Sciatic nerve (tissue), 2 donors: ENCODE measurements at regions of chr1 and their contacts with region 1.

Region 1: DNA sequence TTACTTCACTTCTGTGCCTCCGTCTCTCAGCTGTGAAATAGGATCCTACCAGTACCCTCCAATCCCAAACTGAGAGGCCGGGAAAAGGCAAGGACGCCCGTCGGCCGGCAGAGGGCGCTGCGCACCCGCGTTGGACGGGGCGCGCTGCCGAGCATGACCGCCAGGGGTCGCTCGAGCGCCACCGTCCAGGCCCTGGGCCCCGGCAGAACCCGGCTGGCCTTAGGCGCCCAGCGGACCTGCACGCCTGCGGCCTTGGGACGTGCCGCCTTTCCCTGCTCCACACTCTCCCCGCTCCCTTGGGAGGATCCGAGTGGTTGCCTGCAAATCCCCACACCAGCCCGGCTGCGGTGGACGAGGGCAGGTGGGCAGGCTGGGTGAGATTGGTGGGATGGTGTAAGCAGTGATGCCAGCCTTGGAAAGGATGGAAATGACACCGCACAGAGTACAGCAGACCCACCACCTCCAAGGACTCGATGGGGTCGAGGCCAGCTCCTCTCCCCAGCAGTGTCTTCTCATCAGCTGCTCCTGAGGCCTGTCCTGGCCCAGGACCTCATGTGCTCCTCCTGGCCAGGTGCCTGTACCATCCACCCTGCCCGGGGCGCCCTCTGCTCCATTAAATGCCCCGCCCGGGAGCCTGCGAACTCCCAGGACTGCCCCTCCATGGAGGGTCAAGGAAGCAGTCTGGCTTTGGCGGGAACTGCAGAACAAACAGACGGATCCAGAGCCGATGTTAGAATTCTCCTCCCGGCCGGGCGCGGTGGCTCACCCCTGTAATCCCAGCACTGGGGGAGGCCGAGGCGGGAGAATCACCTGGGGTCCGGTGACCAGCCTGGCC is 47.4 kb upstream of the LBR start:
- DNase-seq: peak; percentile 78
- ATAC-seq: peak; percentile 89

Region 2: GRCh38 chr1:225388372-225388771 is 86.8 kb before region 1 on chr1:
- intact Hi-C with region 1: no loop called
- DNase-seq: no peak
- ATAC-seq: no peak

Region 3: GRCh38 chr1:225428068-225428880 is 46.9 kb before region 1 on chr1:
- intact Hi-C with region 1: no loop called
- DNase-seq: peak; percentile 95
- ATAC-seq: peak; percentile 98

Region 4: DNA sequence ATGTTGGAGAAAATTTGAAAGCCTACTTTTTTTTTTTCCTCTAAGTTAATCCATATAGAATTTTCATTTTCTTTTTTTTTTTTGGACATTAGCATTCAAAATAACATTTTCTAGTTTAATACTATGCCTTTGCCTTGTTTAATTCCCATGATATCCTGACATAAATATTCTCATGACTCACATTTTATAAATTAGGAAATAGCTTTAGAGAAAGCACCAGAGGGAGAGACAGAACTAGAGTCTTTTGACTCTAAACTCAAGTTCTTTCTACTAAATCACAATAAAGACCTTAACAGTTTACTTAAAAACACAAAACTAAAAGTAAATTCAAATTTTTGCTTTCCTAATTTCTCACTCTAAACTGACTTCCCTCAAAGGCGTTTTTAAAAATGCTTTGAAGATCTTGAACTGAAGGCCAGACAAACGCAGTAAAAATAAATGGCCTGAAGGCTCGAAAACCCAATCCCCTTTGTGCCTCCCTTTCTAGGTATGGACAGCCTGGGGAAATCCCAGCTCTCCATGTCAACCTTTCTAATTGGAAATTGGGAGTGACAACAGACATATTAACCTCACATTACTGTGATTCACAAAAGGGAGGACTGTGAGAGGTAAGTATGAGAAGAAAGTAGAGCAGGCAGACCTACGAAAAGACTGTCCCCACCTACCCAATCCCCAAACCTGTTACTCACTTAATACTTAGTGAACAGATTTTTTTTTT is 73.1 kb after region 1 on chr1:
- intact Hi-C with region 1: no loop called
- DNase-seq: no peak
- ATAC-seq: no peak

Region 5: DNA sequence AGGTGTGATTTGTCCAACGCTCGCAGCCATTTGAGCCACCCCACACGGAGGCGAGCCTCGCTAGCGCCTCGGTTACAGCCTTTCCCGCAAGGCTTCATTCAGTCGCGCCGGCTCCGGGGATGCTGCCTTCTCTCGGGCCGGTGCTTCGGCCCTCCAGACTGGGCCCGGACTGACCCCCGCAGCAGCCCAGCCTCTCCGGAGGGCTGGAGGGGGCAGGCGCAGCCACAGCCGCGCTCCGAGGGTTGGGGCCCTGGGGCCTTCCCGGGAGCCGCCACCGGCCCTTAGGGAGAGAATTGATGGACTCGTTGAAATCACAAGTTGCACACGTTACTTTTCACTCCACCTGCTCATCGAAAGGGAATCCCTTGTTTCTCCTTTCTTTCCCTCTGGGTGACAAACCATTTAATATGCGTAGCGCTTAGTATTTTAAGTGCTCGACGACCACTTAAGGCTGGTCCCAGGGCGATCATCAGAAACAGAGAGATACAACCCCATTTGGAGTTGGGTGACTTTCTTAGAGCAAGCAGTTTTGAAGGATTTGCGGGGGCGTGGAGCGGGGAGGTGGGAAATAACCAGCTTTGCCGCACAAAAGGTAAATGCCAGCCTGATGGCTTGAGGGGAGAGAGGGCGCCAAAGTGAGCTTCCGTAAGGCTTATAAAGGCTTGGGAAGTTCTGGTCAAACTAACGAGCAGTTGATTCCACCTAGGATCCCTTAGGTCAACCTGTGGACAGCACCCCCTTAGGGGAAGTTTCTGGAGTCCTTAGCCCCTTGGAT is 202.3 kb after region 1 on chr1:
- intact Hi-C with region 1: no loop called
- DNase-seq: no peak
- ATAC-seq: peak; percentile 62

Region 6: GRCh38 chr1:225772323-225772768 is 297.1 kb after region 1 on chr1:
- intact Hi-C with region 1: loop called (anchors 5 kb)
- DNase-seq: peak; percentile 88
- ATAC-seq: peak; percentile 83

Region 7: DNA sequence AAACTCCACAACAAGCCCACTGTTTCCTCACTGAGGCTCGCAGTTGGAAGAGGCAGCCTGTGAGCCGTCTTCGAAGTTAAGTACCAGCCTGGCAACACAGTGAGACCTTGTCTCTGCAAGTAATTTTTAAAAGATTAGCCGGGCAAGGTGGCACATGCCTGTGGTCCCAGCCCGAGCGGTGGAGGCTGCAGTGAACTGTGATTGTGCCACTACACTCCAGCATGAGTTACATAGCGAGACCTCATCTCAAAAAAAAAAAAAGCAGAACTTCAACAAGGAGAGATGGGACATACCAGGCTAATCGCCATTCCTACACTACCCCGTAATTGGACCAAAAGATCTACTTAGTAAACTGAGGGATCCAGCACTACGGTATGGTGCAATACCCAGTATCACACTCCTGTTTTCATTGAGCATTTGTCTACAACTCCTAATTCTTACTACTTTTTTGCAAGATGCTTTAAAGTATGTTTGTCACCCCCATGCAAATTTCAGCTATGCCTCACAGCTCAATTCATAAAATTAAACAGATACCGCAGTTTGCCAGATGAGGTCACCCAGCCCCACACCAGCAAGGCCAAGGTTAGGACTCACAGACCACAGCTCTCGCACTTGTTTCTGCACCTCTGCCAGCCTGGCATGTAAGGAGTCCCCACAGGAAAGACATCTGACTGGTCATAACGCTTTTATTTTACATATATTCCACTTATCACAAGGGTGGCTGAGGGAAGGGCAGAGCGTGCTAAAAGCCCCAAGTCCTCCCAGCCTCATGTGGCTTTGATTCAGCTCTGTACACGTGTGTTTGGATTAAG is 502.9 kb after region 1 on chr1:
- intact Hi-C with region 1: loop called (anchors 5 kb)
- DNase-seq: no peak
- ATAC-seq: no peak